Endothelial cell of umbilical vein (primary cell): ENCODE measurements at regions of chr13 and their contacts with region 1.

Region 1: GRCh38 chr13:74133657-74134201 is 475 bp downstream of the KLF12 start:
- DNase-seq: peak; percentile 90
- H3K4me3 ChIP-seq: peak overlapping the region; percentile 74 to 92 (median 91)
- H3K27ac ChIP-seq: peak overlapping the region; percentile 64
- H3K4me1 ChIP-seq: peaks cover 32% of the 10 kb centered on the region
- H3K27me3 ChIP-seq: no peaks in the 10 kb centered on the region
- CTCF ChIP-seq: no peak
- POLR2A ChIP-seq: no peak

Region 2: DNA sequence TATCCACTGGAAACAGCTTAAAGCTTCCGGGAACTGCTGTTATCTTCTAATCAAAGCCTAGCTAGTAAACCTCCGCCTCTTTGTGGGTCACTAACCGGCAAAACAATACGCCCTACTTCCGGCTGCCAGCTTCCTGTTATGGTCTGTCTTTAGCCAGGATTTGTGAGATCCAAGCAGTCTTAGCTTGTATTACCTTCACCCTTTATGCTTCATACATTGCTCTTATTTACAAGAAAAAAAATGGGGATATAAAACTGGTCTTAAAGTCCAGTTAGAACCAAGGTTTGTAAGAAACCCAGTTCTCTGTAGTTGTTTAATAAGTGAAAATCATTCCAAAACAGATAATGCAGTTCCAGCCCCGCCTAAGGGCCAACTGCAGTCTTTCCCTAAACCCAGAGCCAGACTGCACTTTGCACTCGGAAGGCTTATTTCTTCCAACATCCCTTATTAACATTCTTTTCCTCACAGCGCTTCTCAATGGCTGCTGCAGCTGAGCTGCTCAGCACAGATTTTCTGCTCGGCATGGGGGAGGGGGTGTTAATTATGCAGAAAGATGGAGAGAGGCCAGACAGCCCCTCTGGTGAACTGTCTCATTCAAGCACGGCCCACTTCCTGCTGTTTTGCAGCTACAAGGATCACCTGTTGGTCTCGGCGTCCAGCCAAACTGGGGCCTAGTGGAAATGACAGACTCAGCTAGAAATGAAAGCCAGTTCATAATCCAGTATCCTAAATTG is 367.9 kb before region 1 on chr13:
- CTCF ChIA-PET with region 1: no interaction called
- POLR2A ChIA-PET with region 1: no interaction called
- dilution Hi-C with region 1: no loop called
- intact Hi-C with region 1: loop called (anchors 1 kb)
- DNase-seq: peak; percentile 95
- H3K4me3 ChIP-seq: peak overlapping the region in 1 of 3 experiments; percentile 10
- H3K27ac ChIP-seq: peak overlapping the region; percentile 62
- H3K4me1 ChIP-seq: peaks cover 33% of the 10 kb centered on the region
- H3K27me3 ChIP-seq: no peaks in the 10 kb centered on the region
- CTCF ChIP-seq: no peak
- POLR2A ChIP-seq: no peak

Region 3: GRCh38 chr13:73954808-73955207 is 178.9 kb before region 1 on chr13:
- CTCF ChIA-PET with region 1: no interaction called
- POLR2A ChIA-PET with region 1: no interaction called
- dilution Hi-C with region 1: no loop called
- intact Hi-C with region 1: loop called (anchors 5 kb)
- DNase-seq: no peak
- H3K4me3 ChIP-seq: no peak overlapping the region
- H3K27ac ChIP-seq: no peak overlapping the region
- H3K4me1 ChIP-seq: no peaks in the 10 kb centered on the region
- H3K27me3 ChIP-seq: no peaks in the 10 kb centered on the region
- CTCF ChIP-seq: no peak
- POLR2A ChIP-seq: no peak

Region 4: GRCh38 chr13:74193391-74193790 is 59.7 kb after region 1 on chr13:
- CTCF ChIA-PET with region 1: interaction called, 3 read pairs
- POLR2A ChIA-PET with region 1: no interaction called
- dilution Hi-C with region 1: no loop called
- intact Hi-C with region 1: loop called (anchors 1 kb)
- DNase-seq: peak; percentile 94
- H3K4me3 ChIP-seq: no peak overlapping the region
- H3K27ac ChIP-seq: peak overlapping the region; percentile 38
- H3K4me1 ChIP-seq: peaks cover 19% of the 10 kb centered on the region
- H3K27me3 ChIP-seq: no peaks in the 10 kb centered on the region
- CTCF ChIP-seq: no peak
- POLR2A ChIP-seq: no peak

Region 5: DNA sequence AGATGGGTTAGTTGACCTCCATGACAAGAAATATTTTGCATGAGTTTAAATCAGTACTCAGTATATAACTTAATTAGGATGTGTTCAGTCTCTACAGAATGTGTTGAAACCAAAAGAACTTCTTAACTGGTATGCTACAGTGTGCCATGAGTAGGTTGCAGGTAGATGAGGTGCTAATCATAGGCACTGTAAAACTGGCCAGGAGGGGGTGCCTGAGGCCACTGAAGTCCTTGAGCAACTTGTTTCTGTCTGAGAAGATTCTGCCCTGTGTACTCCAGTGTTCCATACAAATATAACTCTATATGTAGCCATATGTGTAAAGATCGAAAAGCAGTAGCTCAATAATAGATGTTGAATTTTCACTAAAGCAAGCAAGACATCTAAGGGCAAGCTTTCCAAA is 549.7 kb after region 1 on chr13:
- CTCF ChIA-PET with region 1: no interaction called
- POLR2A ChIA-PET with region 1: no interaction called
- dilution Hi-C with region 1: no loop called
- intact Hi-C with region 1: loop called (anchors 10 kb)
- DNase-seq: peak; percentile 19
- H3K4me3 ChIP-seq: no peak overlapping the region
- H3K27ac ChIP-seq: no peak overlapping the region
- H3K4me1 ChIP-seq: peaks cover 4% of the 10 kb centered on the region
- H3K27me3 ChIP-seq: no peaks in the 10 kb centered on the region
- CTCF ChIP-seq: no peak
- POLR2A ChIP-seq: no peak

Region 6: DNA sequence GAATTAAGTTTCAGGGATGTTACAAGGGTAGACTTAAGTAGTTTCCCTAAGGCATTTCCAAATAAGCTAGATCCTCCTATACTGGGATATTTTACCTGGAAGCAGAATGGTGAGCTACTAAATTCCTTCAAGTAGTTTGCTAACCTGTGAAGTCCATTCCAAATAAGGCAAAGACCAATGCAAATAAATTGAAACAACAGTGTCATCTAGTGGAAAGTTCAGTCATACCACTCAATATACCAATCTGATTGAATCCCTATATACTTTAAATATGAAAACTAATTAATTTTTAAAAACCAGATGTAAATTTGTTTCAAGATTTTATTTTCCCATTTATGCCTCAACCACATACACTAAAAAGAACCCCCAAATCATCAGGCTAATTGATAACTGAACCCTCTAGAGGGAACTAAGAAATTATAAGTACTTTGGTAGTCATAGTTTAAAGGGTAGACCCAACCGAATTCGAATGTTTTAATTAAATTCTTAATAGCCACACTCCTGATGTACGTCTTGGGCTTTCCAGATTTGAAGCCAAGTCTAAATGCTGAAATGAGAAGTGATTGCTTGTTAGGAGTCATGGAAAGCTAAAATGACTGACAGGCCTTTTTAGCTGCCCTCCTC is 1124.5 kb after region 1 on chr13:
- CTCF ChIA-PET with region 1: no interaction called
- POLR2A ChIA-PET with region 1: no interaction called
- dilution Hi-C with region 1: no loop called
- intact Hi-C with region 1: loop called (anchors 1 kb)
- DNase-seq: peak; percentile 65
- H3K4me3 ChIP-seq: no peak overlapping the region
- H3K27ac ChIP-seq: no peak overlapping the region
- H3K4me1 ChIP-seq: no peaks in the 10 kb centered on the region
- H3K27me3 ChIP-seq: peaks cover 13 to 33% of the 10 kb centered on the region in 2 experiments
- CTCF ChIP-seq: peak; percentile 35 to 37
- POLR2A ChIP-seq: no peak